ENCODE measurements at regions of chr7 and their contacts with region 1.

Region 1: DNA sequence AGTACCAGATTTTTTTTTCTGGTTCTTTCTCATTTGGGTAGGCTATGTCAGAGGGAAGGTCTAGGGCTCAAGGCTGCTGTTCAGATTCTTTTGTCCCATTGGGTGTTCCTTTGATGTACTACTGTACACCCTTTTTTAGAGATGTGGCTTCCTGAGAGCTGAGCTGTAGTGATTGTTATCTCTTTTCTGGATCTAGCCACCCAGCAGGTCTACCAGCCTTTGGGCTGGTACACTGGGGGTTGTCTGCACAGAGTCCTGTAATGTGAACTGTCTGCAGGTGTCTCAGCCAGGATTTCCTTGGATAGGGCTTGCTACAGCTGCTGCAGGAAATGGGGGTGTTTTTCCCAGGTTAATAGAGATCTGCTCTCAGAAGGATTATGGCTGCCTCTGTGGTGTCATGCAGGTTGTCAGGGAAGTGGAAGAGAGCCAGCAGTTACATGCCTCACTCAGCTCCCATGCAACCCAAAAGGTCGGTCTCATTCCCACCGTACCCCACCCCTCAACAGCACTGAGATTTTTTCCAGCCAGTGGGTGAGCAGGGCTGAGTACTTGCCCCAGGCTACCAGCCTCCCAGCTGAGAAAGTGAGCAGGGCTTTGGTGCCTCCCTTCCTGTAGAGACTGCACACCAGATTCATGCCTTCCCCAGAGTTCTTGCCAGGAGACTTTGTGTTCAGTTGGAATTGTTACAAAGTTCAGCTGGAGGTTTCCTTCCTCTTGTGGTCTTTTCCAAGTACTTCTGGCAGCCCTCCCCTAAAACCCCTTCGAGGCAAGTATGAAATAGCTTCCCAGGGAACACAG is 63.3 kb downstream of the ZNF107 start:
- DNase-seq: no peak
- ATAC-seq: no peak
- H3K4me3 ChIP-seq: no peak overlapping the region
- H3K27ac ChIP-seq: no peak overlapping the region
- H3K4me1 ChIP-seq: no peaks in the 10 kb centered on the region
- H3K27me3 ChIP-seq: no peaks in the 10 kb centered on the region
- CTCF ChIP-seq: no peak
- POLR2A ChIP-seq: no peak

Region 2: DNA sequence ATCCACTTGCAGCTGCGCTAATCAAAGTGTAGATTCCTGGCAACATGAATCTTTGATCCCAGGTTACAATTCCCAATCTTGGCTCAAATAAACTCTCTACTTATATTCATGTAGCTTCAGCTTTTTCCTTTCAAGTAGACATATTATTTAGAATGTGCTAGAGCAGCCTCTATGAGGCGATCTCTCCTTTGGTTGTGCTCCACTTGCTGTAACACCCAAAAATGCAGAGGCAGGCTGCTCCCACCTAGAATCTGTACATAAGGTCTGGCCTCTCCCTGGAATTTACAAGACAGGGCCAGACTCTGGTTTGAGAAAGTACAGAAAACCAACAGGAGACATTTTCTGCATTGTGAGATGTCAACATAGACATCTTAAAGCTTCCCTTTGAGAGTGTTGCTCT is 40.3 kb before region 1 on chr7:
- intact Hi-C with region 1: no loop called
- DNase-seq: no peak
- ATAC-seq: no peak
- H3K4me3 ChIP-seq: no peak overlapping the region
- H3K27ac ChIP-seq: no peak overlapping the region
- H3K4me1 ChIP-seq: no peaks in the 10 kb centered on the region
- H3K27me3 ChIP-seq: no peaks in the 10 kb centered on the region
- CTCF ChIP-seq: no peak
- POLR2A ChIP-seq: no peak

Region 3: DNA sequence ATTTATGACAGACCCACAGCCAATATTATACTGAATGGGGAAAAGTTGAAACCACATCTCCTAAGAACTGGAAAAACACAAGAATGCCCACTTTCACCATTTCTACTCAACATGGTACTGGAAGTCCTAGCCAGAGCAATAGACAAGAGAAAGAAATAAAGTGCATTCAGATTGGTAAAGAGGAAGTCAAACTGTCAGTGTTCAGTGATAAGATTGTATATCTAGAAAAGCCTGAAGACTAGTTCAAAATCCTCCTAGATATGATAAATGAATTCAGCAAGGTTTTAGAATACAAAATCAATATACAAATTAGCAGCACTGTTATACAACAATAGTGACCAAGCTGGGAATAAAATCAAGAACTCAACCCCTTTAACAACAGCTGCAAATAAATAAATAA is 58.0 kb after region 1 on chr7:
- intact Hi-C with region 1: loop called in 1 of 10 experiments (anchors 10 kb)
- DNase-seq: no peak
- ATAC-seq: no peak
- H3K4me3 ChIP-seq: no peak overlapping the region
- H3K27ac ChIP-seq: no peak overlapping the region
- H3K4me1 ChIP-seq: no peaks in the 10 kb centered on the region
- H3K27me3 ChIP-seq: peaks cover 0 to 6% (median 0%) of the 10 kb centered on the region in 9 donors
- CTCF ChIP-seq: no peak
- POLR2A ChIP-seq: no peak

Measured in heart left ventricle (tissue), 16 donors.